AG04449 (cell line): ENCODE measurements at regions of chr12 and their contacts with region 1.

Region 1: DNA sequence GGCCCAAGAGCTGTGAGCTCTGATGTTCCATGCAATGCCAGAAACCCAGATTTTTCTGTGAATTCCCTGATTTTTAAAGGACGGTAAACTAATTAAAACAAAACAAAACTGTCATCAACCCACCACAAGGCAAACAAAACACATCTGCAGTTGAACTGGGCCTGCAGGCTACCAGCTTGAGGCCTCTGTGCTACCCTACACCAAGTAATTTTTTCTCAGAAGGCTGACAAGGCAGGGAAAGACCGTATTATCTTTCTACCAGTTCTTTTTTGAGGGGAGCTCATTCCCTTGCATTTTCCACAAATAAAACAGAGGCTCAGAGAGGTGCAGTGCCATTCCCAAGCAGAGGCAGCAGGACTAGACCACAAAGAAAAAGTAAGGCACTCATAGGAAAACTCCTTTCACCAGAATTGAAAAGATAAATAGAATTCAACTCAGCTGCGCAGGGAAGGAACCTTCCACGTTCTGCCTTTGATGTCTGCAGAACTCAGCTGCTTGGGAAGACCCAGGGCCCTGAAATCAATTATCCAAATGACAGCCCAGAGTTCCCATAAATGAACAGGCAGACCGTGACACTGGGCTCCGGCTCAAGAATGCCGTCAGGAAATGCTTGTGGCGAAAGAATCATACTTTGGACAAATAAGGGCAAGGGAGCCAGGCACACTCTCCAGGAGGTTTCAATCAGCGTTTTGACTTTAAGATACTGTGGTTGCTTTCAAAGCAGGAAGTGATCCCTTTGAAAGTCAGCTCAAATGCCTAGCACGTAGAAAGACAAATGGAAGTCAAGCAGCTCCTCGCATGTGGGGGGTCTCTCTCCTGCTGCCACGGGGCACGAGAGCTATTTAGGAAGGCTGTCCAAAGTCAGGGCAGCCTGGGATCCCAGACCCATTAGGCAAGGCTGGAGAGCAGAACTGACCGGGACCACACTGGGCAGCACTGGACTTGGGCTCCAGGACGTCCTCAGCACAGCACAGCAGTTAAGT is 14.1 kb downstream of the KCTD10 start:
- DNase-seq: peak; percentile 97
- H3K4me3 ChIP-seq: peak overlapping the region; percentile 40
- CTCF ChIP-seq: no peak

Region 2: DNA sequence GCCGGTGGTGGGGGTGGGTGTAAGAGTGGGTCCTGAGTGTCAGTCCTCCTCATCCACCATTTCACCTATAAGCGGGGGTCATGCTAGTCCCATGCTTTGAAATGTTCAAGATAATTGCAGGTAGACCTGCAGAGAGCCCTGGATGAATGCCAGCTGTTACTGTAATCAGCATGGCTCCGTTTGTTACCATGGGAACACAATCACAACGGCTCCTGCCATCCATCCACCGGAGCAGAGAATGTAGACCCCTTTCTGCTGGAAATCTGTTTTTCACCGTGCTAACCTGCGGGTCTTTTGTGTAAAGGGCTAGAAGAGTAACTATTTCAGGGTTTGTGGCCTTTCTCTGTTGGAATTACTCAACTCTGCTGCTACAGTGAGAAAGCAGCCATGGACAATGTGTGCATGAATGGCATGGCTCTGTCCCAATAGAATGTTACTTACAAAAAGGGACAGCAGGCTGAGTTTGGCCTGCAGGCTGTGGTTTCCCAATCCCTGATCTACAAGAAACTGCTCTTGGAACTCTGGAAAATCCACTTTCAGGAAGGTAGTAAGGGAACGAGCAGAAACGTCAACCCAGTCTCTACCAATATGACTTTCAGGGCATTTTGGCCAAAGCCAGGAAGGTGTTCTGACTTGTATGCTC is 22.0 kb before region 1 on chr12:
- CTCF ChIA-PET with region 1: interaction called, 6 read pairs
- POLR2A ChIA-PET with region 1: interaction called, 14 read pairs
- DNase-seq: no peak
- H3K4me3 ChIP-seq: no peak overlapping the region
- CTCF ChIP-seq: no peak

Region 3: DNA sequence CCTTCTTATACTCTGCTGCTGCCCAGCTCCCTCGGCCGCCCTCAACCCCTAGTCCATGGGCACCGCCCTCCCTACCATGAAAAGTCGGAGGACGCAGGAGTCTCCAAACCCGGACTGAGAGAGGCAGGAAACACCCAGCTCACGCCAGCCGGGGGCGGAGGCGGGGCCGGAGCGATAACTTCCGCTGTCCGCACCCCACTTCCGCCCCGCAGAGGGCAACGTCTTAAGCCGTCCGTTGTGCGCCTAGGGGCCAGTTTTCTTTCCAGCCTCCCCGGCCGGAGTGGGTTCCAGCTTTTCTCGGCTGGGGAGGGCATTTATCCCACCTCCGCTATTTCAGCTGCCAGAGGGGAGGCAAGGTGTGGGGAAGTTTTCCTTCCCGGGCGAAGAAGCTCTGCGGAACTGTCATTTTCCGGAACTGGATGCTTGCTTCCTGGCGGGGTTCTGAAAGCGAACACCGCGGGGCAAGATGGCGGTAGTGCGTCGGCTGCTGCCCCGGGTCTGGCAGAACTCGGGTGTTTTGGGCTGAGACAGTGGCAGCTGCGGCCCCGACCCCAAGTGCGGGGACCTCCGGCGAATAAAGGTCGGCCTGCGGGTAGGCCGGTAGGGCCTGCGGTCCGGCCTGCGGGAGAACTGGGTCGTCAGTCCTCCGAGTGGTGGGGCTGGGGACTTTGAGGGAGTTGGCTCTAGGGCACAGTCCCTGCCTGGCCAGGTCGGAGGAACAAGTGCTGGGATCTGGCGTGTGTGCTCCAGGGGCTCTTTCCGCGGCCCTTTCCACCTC is 14.4 kb after region 1 on chr12 and contains the starts of genes KCTD10 and UBE3B:
- CTCF ChIA-PET with region 1: interaction called, 16 read pairs
- POLR2A ChIA-PET with region 1: interaction called, 32 read pairs
- DNase-seq: no peak
- H3K4me3 ChIP-seq: peak within 1 kb of the TSS; percentile 95
- CTCF ChIP-seq: no peak